ENCODE measurements at regions of chr2 and their contacts with region 1.

Region 1: GRCh38 chr2:218257390-218257981 is 3.3 kb upstream of the GPBAR1 start:
- DNase-seq: peak; percentile 67
- H3K4me3 Mint-ChIP-seq: no peak overlapping the region
- H3K27ac Mint-ChIP-seq: peak overlapping the region; percentile 80
- H3K4me1 Mint-ChIP-seq: peaks cover 21% of the 10 kb centered on the region
- H3K27me3 Mint-ChIP-seq: no peaks in the 10 kb centered on the region

Region 2: GRCh38 chr2:218063486-218063885 is 194.0 kb before region 1 on chr2:
- CTCF ChIA-PET with region 1: no interaction called
- POLR2A ChIA-PET with region 1: no interaction called
- DNase-seq: no peak
- H3K4me3 Mint-ChIP-seq: no peak overlapping the region
- H3K27ac Mint-ChIP-seq: no peak overlapping the region
- H3K4me1 Mint-ChIP-seq: peaks cover 5% of the 10 kb centered on the region
- H3K27me3 Mint-ChIP-seq: peaks cover 13% of the 10 kb centered on the region

Region 3: GRCh38 chr2:218218268-218219185 is 39.0 kb before region 1 on chr2:
- CTCF ChIA-PET with region 1: interaction called, 14 read pairs
- POLR2A ChIA-PET with region 1: interaction called, 3 read pairs
- DNase-seq: peak; percentile 47
- H3K4me3 Mint-ChIP-seq: peak overlapping the region; percentile 100
- H3K27ac Mint-ChIP-seq: peak overlapping the region; percentile 94
- H3K4me1 Mint-ChIP-seq: peaks cover 59% of the 10 kb centered on the region
- H3K27me3 Mint-ChIP-seq: no peaks in the 10 kb centered on the region

Region 4: GRCh38 chr2:218229239-218229638 is 28.2 kb before region 1 on chr2:
- CTCF ChIA-PET with region 1: interaction called, 13 read pairs
- POLR2A ChIA-PET with region 1: no interaction called
- DNase-seq: peak; percentile 71
- H3K4me3 Mint-ChIP-seq: peak overlapping the region; percentile 37
- H3K27ac Mint-ChIP-seq: peak overlapping the region; percentile 86
- H3K4me1 Mint-ChIP-seq: peaks cover 75% of the 10 kb centered on the region
- H3K27me3 Mint-ChIP-seq: no peaks in the 10 kb centered on the region

Region 5: GRCh38 chr2:218269899-218270720 is 12.6 kb after region 1 on chr2 and contains the starts of genes AAMP and PNKD:
- CTCF ChIA-PET with region 1: interaction called, 30 read pairs
- POLR2A ChIA-PET with region 1: no interaction called
- DNase-seq: peak; percentile 100
- H3K4me3 Mint-ChIP-seq: peak within 1 kb of the TSS; percentile 88
- H3K27ac Mint-ChIP-seq: peak within 1 kb of the TSS; percentile 92
- H3K4me1 Mint-ChIP-seq: peaks cover 47% of the 10 kb centered on the region
- H3K27me3 Mint-ChIP-seq: no peaks in the 10 kb centered on the region
- total RNA-seq, gene AAMP: 42.3 to 51.1 TPM
- total RNA-seq, gene PNKD: 34.0 to 39.1 TPM

Region 6: DNA sequence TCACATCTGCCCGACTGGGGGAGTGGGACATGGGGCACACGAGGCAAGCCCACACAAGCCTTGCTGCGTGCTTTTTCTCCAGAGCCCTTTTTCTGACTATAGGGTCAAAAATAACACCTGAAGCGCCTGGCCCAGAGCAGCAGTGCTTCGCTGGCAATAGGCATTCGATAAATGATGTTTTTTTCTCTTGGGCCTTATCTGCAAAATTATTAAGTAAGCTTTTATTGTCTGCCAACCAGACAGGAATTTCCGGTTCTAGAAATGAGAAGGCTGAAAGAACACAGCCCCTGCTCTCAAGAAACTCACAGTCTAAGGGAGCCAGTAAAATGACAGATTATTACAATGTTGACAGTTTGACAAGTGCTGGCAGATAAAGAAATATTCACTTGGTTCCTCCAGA is 37.5 kb after region 1 on chr2:
- CTCF ChIA-PET with region 1: no interaction called
- POLR2A ChIA-PET with region 1: no interaction called
- DNase-seq: no peak
- H3K4me3 Mint-ChIP-seq: no peak overlapping the region
- H3K27ac Mint-ChIP-seq: peak overlapping the region; percentile 50
- H3K4me1 Mint-ChIP-seq: peaks cover 40% of the 10 kb centered on the region
- H3K27me3 Mint-ChIP-seq: no peaks in the 10 kb centered on the region

Measured in activated CD4-positive, alpha-beta T cell treated with anti-CD3 and anti-CD28 coated beads, Interleukin-2, amount 10 ng/mL, durations not matched to agents 7 days and 5 days (primary cell).